ENCODE measurements at regions of chr9 and their contacts with region 1.

Region 1: DNA sequence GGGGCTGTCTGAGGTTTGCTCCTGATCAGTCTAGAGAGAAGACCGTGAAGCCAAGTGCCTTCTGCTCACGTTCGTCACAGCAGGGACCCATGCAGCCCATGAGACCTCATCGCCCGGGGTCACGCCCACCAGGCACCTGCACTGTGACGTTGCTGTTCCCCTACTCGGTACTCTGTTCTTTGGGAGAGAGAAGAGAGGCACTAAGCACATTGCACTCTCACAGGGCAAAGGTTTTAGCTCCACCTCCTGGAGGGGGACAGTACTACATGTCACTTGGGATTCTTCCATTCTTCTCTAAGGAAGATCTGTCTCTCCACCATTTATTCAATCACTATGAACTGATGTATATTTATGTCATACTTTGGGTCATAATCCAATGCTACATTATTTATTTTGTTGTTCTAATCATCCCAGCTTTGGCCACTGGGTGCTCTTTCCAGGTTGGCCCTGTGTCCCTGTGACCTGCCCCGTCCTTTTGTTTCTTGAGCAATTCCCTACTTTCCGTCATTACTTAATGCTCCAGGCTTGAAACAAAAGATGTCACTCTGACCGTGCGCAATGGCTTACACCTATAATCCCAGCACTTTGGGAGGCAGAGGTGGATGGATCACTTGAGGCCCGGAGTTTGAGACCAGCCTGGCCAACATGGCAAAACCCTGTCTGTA is 31.4 kb upstream of the BRD3 start:
- DNase-seq: peak; percentile 75
- ATAC-seq: peak; percentile 67
- H3K4me3 ChIP-seq: no peak overlapping the region
- H3K27ac ChIP-seq: no peak overlapping the region
- H3K4me1 ChIP-seq: no peaks in the 10 kb centered on the region
- H3K27me3 ChIP-seq: peaks cover 13% of the 10 kb centered on the region
- CTCF ChIP-seq: peak; percentile 80

Region 2: DNA sequence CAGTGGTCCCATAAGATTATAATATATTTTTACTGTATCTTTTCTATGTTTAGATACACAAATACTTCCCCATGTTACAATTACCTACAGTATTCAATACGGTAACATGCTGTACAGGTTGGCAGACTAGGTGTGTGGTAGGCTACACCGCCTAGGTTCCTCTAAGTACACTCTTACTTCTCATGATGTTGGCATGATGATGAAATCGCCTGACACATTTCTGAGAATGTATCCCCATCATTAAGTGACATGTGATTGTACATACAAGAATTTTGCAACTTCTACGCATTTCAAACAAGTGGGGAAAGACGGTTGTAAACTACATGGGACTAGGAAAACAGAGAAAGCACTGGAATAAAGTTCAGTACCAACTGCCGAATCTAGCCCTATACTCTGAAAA is 1797.7 kb before region 1 on chr9:
- CTCF ChIA-PET with region 1: no interaction called
- POLR2A ChIA-PET with region 1: no interaction called
- intact Hi-C with region 1: no loop called
- DNase-seq: no peak
- ATAC-seq: no peak
- H3K4me3 ChIP-seq: no peak overlapping the region
- H3K27ac ChIP-seq: no peak overlapping the region
- H3K4me1 ChIP-seq: no peaks in the 10 kb centered on the region
- H3K27me3 ChIP-seq: no peaks in the 10 kb centered on the region
- CTCF ChIP-seq: no peak

Region 3: DNA sequence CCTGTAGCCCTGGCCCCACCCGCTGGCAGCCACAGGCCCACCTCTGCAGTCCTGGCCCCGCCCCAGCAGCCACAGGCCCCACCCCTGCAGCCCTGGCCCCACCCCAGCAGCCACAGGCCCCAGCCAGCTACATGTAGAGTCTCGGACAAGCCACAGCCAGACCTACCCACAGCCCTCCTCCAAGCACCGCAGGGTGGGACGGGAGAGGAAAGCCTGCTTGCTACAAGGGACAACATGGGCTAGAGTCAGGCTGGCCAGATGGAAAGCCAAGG is 311.6 kb before region 1 on chr9:
- CTCF ChIA-PET with region 1: no interaction called
- POLR2A ChIA-PET with region 1: no interaction called
- intact Hi-C with region 1: loop called (anchors 5 kb)
- DNase-seq: no peak
- ATAC-seq: no peak; the same call in 1 of the 2 replicates
- H3K4me3 ChIP-seq: no peak overlapping the region
- H3K27ac ChIP-seq: no peak overlapping the region
- H3K4me1 ChIP-seq: no peaks in the 10 kb centered on the region
- H3K27me3 ChIP-seq: no peaks in the 10 kb centered on the region
- CTCF ChIP-seq: no peak

Region 4: GRCh38 chr9:134067904-134068743 is 31.1 kb before region 1 on chr9 and contains the start of gene BRD3:
- CTCF ChIA-PET with region 1: no interaction called
- POLR2A ChIA-PET with region 1: no interaction called
- intact Hi-C with region 1: loop called (anchors 1 kb)
- DNase-seq: peak; percentile 85
- ATAC-seq: peak; percentile 86
- H3K4me3 ChIP-seq: peak within 1 kb of the TSS; percentile 89
- H3K27ac ChIP-seq: no peak within 1 kb of the TSS
- H3K4me1 ChIP-seq: peaks cover 9% of the 10 kb centered on the region; the same call in 1 of the 2 replicates
- H3K27me3 ChIP-seq: no peaks in the 10 kb centered on the region; the same call in 1 of the 2 replicates
- CTCF ChIP-seq: no peak
- total RNA-seq, gene BRD3: 4.4 and 5.5 TPM in 2 replicates